Activated B cell treated with CpG ODN at 0.5 μM for 24 hours (primary cell): ENCODE measurements at regions of chr1 and their contacts with region 1.

Region 1: DNA sequence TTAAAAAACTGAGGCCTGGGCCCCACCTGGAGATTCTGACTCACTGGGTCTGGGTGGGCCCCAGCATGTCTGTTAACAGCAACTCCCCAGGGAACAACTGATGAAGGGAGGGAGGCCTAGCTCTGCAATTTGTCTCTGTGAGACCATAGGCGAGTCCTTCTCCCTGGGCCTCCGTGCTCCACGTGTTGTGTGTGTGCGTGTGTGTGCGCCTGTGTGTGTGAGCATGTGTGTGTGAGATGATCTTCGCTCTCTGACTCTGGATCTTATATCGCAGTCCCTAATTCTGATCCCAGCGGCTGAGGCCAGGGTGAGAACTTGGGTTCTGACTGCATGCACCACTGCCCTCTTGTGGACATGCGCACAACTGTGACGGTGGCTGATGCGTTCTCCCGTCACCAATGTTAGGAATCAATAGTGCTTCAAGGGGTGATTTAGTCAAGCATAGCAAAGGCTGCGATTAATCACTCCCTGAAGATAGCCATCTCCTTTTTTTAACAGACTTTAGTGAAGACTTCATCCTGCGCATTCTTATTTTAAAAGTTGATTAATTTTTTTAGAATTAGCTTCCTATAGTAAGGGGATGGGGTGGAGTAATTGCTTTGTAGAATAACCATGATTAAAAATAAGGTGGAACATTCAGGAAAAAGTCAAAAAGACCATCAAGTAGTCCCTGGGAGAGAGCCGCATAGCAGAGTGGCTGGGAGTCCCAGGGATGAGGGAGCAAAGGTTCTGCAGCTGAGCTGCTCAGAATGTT is 62.4 kb upstream of the USP24 start:
- DNase-seq: peak; percentile 71
- ATAC-seq: peak; percentile 90
- H3K4me3 Mint-ChIP-seq: peak overlapping the region; percentile 72
- H3K27ac Mint-ChIP-seq: peak overlapping the region; percentile 79
- H3K4me1 Mint-ChIP-seq: peaks cover 25% of the 10 kb centered on the region
- H3K27me3 Mint-ChIP-seq: no peaks in the 10 kb centered on the region
- CTCF ChIP-seq: no peak

Region 2: DNA sequence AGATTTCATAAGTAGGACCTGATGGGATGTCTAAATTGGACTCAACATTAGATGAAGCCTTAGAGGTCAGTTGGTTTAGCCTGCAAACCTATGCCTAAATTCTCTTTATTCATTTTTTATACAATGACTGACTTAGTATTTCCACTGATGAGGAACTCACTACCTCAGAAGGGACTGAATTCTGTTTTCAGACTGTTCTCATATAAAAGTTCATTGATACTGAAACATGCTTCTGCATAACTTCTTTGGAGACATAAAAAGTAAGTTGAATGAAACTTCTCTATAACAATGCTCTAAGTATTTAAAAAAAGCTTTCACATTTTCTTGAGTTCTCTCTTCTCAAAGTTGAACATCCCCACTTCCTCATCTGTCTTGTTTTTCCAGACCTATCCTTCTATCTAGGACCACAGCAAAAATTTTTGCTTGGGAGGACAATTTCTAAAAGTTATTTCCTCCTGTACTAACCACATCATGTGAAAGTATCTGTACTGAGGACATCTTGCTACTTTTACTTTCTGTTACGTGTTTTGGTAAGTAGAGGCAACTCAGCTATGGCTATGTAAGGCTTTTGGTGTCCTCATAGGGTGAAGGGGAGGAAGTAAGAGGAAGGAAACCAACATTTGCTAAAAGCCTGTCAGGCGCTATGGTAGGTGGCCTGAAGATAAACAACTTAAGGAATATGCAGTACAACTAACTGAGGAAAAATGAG is 126.5 kb before region 1 on chr1:
- CTCF ChIA-PET with region 1: interaction called, 13 read pairs
- POLR2A ChIA-PET with region 1: no interaction called
- intact Hi-C with region 1: no loop called
- DNase-seq: no peak
- ATAC-seq: peak; percentile 66
- H3K4me3 Mint-ChIP-seq: no peak overlapping the region
- H3K27ac Mint-ChIP-seq: peak overlapping the region; percentile 83
- H3K4me1 Mint-ChIP-seq: peaks cover 18% of the 10 kb centered on the region
- H3K27me3 Mint-ChIP-seq: no peaks in the 10 kb centered on the region
- CTCF ChIP-seq: no peak

Region 3: GRCh38 chr1:55209247-55209646 is 68.3 kb before region 1 on chr1:
- CTCF ChIA-PET with region 1: interaction called, 37 read pairs
- POLR2A ChIA-PET with region 1: interaction called, 12 read pairs
- intact Hi-C with region 1: no loop called
- DNase-seq: no peak
- ATAC-seq: no peak
- H3K4me3 Mint-ChIP-seq: peak overlapping the region; percentile 45
- H3K27ac Mint-ChIP-seq: peak overlapping the region; percentile 59
- H3K4me1 Mint-ChIP-seq: peaks cover 89% of the 10 kb centered on the region
- H3K27me3 Mint-ChIP-seq: no peaks in the 10 kb centered on the region
- CTCF ChIP-seq: no peak

Region 4: DNA sequence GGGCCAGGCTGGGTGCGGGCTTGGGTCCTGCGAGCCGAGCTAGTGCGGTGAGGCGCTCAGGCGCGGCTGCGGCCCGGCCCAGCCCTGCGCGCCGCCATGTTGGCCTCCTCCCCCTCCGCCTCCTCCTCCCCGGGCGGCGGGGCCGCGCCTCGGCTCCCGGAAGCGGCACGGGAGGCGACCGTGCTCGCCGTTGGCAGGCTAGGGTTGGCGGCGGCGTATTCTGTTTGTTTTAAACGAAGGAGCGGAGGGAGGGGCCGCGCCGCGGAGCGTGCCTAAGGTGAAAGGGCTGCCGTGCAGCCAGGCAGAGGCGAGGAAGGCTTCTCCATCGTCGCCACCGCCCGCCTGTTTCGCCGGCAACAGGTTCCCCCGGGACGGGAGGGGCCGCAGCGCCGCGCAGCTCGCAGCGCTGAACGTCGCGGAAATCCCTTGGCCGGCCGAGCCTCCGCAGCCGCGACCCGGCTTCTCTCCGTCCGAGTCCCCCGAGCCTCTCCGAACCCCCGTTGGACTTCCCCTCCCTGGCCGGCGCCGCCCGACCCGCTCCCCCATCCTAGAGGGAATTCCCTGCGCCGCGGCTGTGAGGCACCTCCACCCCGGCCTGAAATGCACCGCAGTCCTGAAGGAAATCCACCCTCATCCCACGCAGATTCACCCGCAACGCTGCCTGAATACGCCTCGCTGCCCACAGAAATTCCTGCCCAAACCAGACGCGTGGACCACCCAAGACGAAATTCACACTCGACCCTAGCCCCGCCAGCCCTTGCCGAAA is 62.1 kb before region 1 on chr1 and contains the start of gene USP24:
- CTCF ChIA-PET with region 1: interaction called, 37 read pairs
- POLR2A ChIA-PET with region 1: interaction called, 7 read pairs
- intact Hi-C with region 1: loop called (anchors 1 kb)
- DNase-seq: peak; percentile 79
- ATAC-seq: peak; percentile 76
- H3K4me3 Mint-ChIP-seq: peak within 1 kb of the TSS; percentile 92
- H3K27ac Mint-ChIP-seq: peak within 1 kb of the TSS; percentile 97
- H3K4me1 Mint-ChIP-seq: peaks cover 65% of the 10 kb centered on the region
- H3K27me3 Mint-ChIP-seq: no peaks in the 10 kb centered on the region
- CTCF ChIP-seq: no peak
- total RNA-seq, gene USP24: 91.4 and 93.2 TPM in 2 replicates

Region 5: DNA sequence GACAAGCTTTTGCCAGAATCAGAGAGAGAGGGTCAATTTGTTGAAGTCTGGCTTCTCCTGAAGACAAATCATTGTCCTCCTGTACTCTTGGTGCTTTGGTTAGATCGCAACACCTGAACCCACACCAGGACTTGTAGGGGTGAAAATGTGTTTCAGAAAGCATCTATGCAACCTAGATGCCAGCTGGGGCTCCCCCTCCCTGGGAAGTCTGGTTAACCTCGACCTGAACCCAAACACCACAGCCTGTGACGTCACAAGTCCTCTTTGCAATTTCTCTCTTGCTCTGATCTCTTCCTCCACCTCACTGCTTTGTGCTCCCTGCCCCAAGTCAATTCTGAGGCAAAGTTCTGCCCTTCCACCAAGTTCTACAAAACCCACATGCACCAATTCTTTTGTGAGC is 19.6 kb before region 1 on chr1:
- CTCF ChIA-PET with region 1: interaction called, 14 read pairs
- POLR2A ChIA-PET with region 1: interaction called, 8 read pairs
- intact Hi-C with region 1: loop called (anchors 1 kb)
- DNase-seq: peak; percentile 34
- ATAC-seq: peak; percentile 50
- H3K4me3 Mint-ChIP-seq: peak overlapping the region; percentile 57
- H3K27ac Mint-ChIP-seq: peak overlapping the region; percentile 93
- H3K4me1 Mint-ChIP-seq: peaks cover 84% of the 10 kb centered on the region
- H3K27me3 Mint-ChIP-seq: no peaks in the 10 kb centered on the region
- CTCF ChIP-seq: no peak

Region 6: GRCh38 chr1:55337801-55338447 is 60.4 kb after region 1 on chr1:
- CTCF ChIA-PET with region 1: interaction called, 26 read pairs
- POLR2A ChIA-PET with region 1: interaction called, 3 read pairs
- intact Hi-C with region 1: no loop called
- DNase-seq: no peak
- ATAC-seq: peak; percentile 66
- H3K4me3 Mint-ChIP-seq: no peak overlapping the region
- H3K27ac Mint-ChIP-seq: peak overlapping the region; percentile 12
- H3K4me1 Mint-ChIP-seq: peaks cover 9% of the 10 kb centered on the region
- H3K27me3 Mint-ChIP-seq: peaks cover 6% of the 10 kb centered on the region
- CTCF ChIP-seq: no peak

Region 7: GRCh38 chr1:56120021-56120420 is 842.5 kb after region 1 on chr1:
- CTCF ChIA-PET with region 1: no interaction called
- POLR2A ChIA-PET with region 1: no interaction called
- intact Hi-C with region 1: no loop called
- DNase-seq: no peak
- ATAC-seq: no peak
- H3K4me3 Mint-ChIP-seq: no peak overlapping the region
- H3K27ac Mint-ChIP-seq: no peak overlapping the region
- H3K4me1 Mint-ChIP-seq: no peaks in the 10 kb centered on the region
- H3K27me3 Mint-ChIP-seq: peaks cover 12% of the 10 kb centered on the region
- CTCF ChIP-seq: no peak